ENCODE measurements at regions of chr17 and their contacts with region 1.

Region 1: GRCh38 chr17:55496094-55496881 is 15.0 kb downstream of the SMIM36 start:
- DNase-seq: peak in 2 of 10 donors; percentile 9 to 25

Region 2: DNA sequence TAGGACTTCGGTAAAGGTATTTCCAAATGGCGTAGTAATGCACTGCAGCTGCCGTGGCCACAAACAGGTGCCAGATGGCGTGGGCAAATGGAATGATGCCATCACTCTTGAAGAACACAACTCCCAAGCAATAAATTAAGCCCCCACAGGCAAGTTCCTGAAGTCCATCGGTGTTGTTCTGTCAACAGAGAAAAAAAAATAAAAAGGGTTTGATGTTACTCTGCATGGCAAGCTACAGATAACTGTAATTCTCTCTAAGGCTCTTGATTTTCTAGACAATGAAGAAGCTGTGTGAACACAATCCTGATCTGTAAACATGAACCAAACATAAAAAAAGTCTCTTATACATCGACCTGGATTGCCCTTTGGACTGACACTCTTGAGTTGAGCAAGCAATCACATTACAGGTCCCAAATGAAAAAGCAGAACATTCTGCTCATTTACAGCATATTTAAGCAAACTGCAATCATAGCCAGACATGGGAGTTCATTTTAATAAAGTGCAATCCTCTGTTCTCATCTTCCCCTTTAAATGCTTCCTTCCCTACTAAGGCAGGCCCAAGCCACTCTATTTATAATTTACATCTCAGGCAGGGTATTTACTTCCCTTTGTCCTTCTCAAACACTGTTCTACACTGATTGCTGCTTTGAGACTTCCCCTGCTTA is 101.8 kb before region 1 on chr17:
- intact Hi-C with region 1: loop called (anchors 10 kb)
- DNase-seq: no peak

Region 3: GRCh38 chr17:55452139-55452790 is 44.0 kb before region 1 on chr17:
- intact Hi-C with region 1: no loop called
- DNase-seq: no peak

Region 4: GRCh38 chr17:55549140-55549539 is 52.9 kb after region 1 on chr17:
- intact Hi-C with region 1: no loop called
- DNase-seq: no peak

Measured in posterior cingulate gyrus (tissue), 11 donors.